ENCODE measurements at regions of chr3 and their contacts with region 1.

Region 1: GRCh38 chr3:123546133-123546755 is 38.6 kb downstream of the HACD2 start:
- DNase-seq: no peak

Region 2: GRCh38 chr3:122415720-122416654 is 1130.3 kb before region 1 on chr3 and contains the start of gene WDR5B:
- intact Hi-C with region 1: loop called in 1 of 2 experiments (anchors 10 kb)
- DNase-seq: peak; percentile 99
- total RNA-seq, gene WDR5B: 4.0 to 4.9 TPM